Activated CD8-positive, alpha-beta T cell treated with anti-CD3 and anti-CD28 coated beads for 36 hours (primary cell): ENCODE measurements at regions of chr12 and their contacts with region 1.

Region 1: DNA sequence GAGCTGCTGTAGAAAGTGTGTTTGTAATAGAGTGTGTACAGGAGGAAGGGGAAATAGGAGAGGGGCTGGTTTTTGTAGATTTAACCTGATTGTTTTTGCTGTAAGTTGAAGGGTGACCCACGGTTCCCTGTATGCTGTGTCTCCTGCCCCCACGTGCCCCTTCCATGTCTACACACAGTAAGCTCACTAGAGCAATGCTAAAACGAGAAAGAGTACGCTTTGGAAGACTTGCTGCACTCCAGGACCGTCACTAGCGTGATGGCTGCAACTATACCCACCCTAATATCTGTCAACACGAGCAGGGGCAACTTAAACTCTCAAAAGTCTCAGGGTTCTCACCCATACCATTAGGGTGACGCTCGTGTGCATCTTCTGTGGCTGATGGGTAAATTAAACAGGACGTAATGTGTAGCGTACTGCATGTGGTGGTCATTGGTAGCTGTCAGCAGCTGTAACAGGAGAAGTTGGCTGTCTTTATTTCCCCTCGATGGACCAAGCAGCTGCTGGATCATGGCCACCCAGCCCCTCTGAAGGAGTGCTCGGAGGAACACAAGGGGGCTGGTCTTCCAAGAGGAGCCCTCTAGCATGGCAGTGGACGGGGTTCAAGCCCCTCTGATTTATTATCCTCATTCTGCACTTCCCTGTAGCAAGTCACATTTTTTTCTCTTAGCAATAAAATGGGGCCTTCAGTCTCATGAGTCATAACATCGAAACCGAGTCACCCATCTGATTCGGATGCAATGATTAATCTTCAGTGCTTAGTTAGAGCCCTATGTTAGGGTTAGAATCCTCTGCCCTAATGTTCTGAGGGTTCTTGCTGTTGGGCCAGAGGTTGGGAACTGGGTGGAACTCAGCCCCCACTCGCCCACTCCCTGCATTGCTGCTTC is 14.0 kb downstream of the CCND2 start:
- DNase-seq: no peak
- ATAC-seq: peak; percentile 49
- H3K4me3 Mint-ChIP-seq: no peak overlapping the region
- H3K27ac Mint-ChIP-seq: peak overlapping the region; percentile 84
- H3K4me1 Mint-ChIP-seq: peaks cover 90% of the 10 kb centered on the region
- H3K27me3 Mint-ChIP-seq: no peaks in the 10 kb centered on the region
- CTCF ChIP-seq: no peak

Region 2: DNA sequence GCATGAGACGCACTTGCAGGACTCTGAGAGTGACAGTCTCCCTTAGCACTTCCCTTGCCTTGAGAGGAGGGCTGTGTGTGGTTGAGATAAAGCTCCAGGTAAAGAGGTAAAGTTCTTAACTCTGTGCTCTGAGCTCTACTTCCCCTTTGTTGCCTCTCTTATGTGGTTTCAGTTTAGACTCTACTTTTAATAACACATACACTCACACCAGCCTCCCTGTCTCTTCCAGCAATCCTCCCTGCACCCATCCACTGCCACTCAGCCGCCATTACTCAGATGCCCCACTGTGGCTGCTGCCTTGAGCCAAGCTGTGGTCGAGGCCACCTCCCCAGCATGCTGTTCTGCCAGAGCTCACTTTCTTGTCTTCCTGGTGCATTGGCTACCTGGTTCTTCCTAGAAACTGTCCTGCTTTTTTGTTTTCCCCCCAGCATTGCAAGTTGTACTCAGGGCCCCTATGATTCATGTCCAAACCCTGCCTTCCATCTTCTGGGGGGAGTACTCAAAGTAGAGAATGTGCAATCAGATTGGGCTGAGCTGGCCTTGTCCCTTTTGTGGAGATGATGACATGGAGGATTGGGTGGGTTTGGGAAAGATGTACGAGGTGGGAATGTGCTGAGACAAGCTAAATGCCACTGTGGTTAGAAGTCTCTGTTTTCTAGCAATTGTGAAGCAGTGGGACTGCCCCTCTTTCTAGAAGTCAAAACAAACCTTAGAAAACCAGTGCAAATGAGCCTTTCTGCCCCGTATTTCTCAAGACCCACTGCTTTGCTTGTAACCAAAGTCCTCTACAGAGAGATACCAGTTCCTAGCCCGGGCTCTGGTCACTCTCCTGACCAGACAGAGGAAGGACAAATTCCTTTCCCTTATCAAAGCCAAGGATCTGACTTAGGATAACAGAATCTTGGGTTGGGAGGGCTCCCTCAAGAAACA is 298.8 kb before region 1 on chr12:
- CTCF ChIA-PET with region 1: interaction called, 6 read pairs
- POLR2A ChIA-PET with region 1: interaction called, 6 read pairs
- intact Hi-C with region 1: loop called (anchors 5 kb)
- DNase-seq: peak; percentile 67
- ATAC-seq: peak; percentile 78
- H3K4me3 Mint-ChIP-seq: peak overlapping the region; percentile 58
- H3K27ac Mint-ChIP-seq: peak overlapping the region; percentile 85
- H3K4me1 Mint-ChIP-seq: peaks cover 32% of the 10 kb centered on the region
- H3K27me3 Mint-ChIP-seq: no peaks in the 10 kb centered on the region
- CTCF ChIP-seq: no peak

Region 3: GRCh38 chr12:4300883-4301282 is 13.3 kb after region 1 on chr12:
- CTCF ChIA-PET with region 1: no interaction called
- POLR2A ChIA-PET with region 1: interaction called, 69 read pairs
- intact Hi-C with region 1: no loop called
- DNase-seq: no peak
- ATAC-seq: no peak
- H3K4me3 Mint-ChIP-seq: no peak overlapping the region
- H3K27ac Mint-ChIP-seq: no peak overlapping the region
- H3K4me1 Mint-ChIP-seq: peaks cover 22% of the 10 kb centered on the region
- H3K27me3 Mint-ChIP-seq: no peaks in the 10 kb centered on the region
- CTCF ChIP-seq: no peak

Region 4: DNA sequence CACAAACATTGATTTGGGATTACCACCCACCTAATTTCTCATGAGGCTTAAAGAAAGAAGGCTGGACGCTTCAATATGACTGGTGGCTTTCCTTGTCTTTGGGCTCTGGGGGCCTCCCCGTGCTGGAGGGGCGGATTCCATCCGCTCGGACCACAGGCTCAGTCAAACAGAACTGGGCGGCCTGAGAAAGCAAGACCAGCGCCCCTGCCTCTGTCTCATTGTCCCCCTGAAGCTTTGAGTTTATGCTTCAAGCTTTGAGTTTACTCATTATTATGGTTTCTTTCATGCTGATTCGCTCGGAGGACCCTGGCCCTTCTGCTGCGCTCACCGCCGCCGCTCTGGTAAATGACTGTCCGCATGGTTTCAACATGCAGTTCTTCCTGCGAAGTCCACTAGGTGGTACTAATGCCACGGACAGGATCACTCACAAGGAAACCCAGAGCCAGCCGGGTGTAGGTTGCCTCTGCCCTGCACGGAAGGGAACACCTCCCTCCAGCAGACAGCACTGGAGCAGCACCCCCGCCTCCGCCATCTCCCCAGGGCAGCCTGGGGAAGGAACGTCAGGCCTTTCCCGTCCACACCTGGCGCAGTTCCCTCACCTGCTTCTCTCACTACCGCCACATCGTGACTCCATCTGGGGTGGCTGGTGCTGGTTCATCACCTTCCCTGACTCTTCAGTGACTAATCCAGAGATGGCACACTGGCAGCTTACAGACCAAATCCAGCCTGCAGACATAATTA is 20.2 kb after region 1 on chr12:
- CTCF ChIA-PET with region 1: no interaction called
- POLR2A ChIA-PET with region 1: interaction called, 69 read pairs
- intact Hi-C with region 1: no loop called
- DNase-seq: no peak
- ATAC-seq: peak; percentile 54
- H3K4me3 Mint-ChIP-seq: no peak overlapping the region
- H3K27ac Mint-ChIP-seq: peak overlapping the region; percentile 60
- H3K4me1 Mint-ChIP-seq: no peaks in the 10 kb centered on the region
- H3K27me3 Mint-ChIP-seq: no peaks in the 10 kb centered on the region
- CTCF ChIP-seq: no peak